ENCODE measurements at regions of chr6 and their contacts with region 1.

Region 1: GRCh38 chr6:39892490-39893129 is 41.7 kb downstream of the MOCS1 start:
- DNase-seq: peak; percentile 52 to 64
- H3K4me3 ChIP-seq: no peak overlapping the region
- H3K4me3 Mint-ChIP-seq: no peak overlapping the region
- H3K27ac Mint-ChIP-seq: no peak overlapping the region
- H3K4me1 ChIP-seq: peaks cover 7% of the 10 kb centered on the region; the same call in 1 of the 2 replicates
- H3K4me1 Mint-ChIP-seq: no peaks in the 10 kb centered on the region
- H3K27me3 ChIP-seq: no peaks in the 10 kb centered on the region
- H3K27me3 Mint-ChIP-seq: no peaks in the 10 kb centered on the region
- CTCF ChIP-seq: peak; percentile 52 to 84

Region 2: GRCh38 chr6:39361657-39362486 is 530.7 kb before region 1 on chr6:
- CTCF ChIA-PET with region 1: no interaction called
- POLR2A ChIA-PET with region 1: no interaction called
- intact Hi-C with region 1: loop called (anchors 2 kb)
- DNase-seq: peak; percentile 70 to 76
- H3K4me3 ChIP-seq: no peak overlapping the region
- H3K4me3 Mint-ChIP-seq: no peak overlapping the region
- H3K27ac Mint-ChIP-seq: no peak overlapping the region
- H3K4me1 ChIP-seq: no peaks in the 10 kb centered on the region
- H3K4me1 Mint-ChIP-seq: no peaks in the 10 kb centered on the region
- H3K27me3 ChIP-seq: no peaks in the 10 kb centered on the region
- H3K27me3 Mint-ChIP-seq: peaks cover 12% of the 10 kb centered on the region
- CTCF ChIP-seq: peak; percentile 70 to 81

Region 3: GRCh38 chr6:39865011-39865888 is 27.4 kb before region 1 on chr6:
- CTCF ChIA-PET with region 1: no interaction called
- POLR2A ChIA-PET with region 1: no interaction called
- intact Hi-C with region 1: loop called (anchors 1 kb)
- DNase-seq: peak; percentile 64 to 74
- H3K4me3 ChIP-seq: no peak overlapping the region
- H3K4me3 Mint-ChIP-seq: no peak overlapping the region
- H3K27ac Mint-ChIP-seq: no peak overlapping the region
- H3K4me1 ChIP-seq: no peaks in the 10 kb centered on the region
- H3K4me1 Mint-ChIP-seq: no peaks in the 10 kb centered on the region
- H3K27me3 ChIP-seq: no peaks in the 10 kb centered on the region
- H3K27me3 Mint-ChIP-seq: peaks cover 8% of the 10 kb centered on the region
- CTCF ChIP-seq: peak; percentile 64 to 70

Region 4: GRCh38 chr6:40022867-40023266 is 130.3 kb after region 1 on chr6:
- CTCF ChIA-PET with region 1: no interaction called
- POLR2A ChIA-PET with region 1: no interaction called
- intact Hi-C with region 1: no loop called
- DNase-seq: no peak
- H3K4me3 ChIP-seq: no peak overlapping the region
- H3K4me3 Mint-ChIP-seq: no peak overlapping the region
- H3K27ac Mint-ChIP-seq: no peak overlapping the region
- H3K4me1 ChIP-seq: no peaks in the 10 kb centered on the region
- H3K4me1 Mint-ChIP-seq: no peaks in the 10 kb centered on the region
- H3K27me3 ChIP-seq: no peaks in the 10 kb centered on the region
- H3K27me3 Mint-ChIP-seq: peaks cover 11% of the 10 kb centered on the region
- CTCF ChIP-seq: no peak

Region 5: GRCh38 chr6:40097590-40097989 is 205.0 kb after region 1 on chr6:
- CTCF ChIA-PET with region 1: no interaction called
- POLR2A ChIA-PET with region 1: no interaction called
- intact Hi-C with region 1: no loop called
- DNase-seq: no peak
- H3K4me3 ChIP-seq: no peak overlapping the region
- H3K4me3 Mint-ChIP-seq: no peak overlapping the region
- H3K27ac Mint-ChIP-seq: no peak overlapping the region
- H3K4me1 ChIP-seq: no peaks in the 10 kb centered on the region
- H3K4me1 Mint-ChIP-seq: no peaks in the 10 kb centered on the region
- H3K27me3 ChIP-seq: no peaks in the 10 kb centered on the region
- H3K27me3 Mint-ChIP-seq: peaks cover 2% of the 10 kb centered on the region
- CTCF ChIP-seq: no peak